Uterus (tissue), 4 donors: ENCODE measurements at regions of chr6 and their contacts with region 1.

Region 1: DNA sequence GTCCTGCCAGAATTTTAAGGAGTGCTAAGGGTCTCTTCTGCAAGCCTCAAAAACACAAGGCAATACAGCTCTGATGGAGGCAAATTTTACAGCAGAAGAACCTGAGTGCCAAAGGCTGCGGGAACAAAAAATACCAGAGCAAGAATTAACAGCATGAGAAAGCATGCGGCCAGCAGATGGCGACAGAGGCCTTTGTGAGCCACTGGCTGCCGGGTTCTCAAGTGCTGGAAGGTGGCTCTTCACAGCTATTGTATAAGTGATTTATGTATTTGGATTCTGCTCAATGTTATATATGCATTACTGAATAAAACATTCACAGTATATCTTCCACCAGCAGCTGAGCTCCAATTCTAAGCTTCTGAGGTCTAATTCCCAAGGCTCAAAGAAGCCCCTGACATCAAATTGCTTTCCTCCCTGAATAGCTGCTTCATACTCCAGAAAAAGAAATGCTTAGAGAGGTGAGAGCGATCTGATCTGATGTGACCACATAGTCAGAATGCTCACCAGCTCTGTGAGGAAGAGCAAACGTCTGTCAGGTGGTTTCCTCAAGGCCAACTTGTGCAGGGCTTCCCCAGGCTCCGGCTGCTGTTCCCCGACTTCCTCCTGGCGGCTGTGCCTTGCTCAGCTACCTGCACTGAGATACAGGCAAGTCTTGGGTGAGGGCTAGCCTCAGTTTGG is 58.6 kb downstream of the PPP1R3G start:
- DNase-seq: peak; percentile 83 to 84
- H3K4me3 ChIP-seq: no peak overlapping the region
- H3K27ac ChIP-seq: no peak overlapping the region
- H3K4me1 ChIP-seq: no peaks in the 10 kb centered on the region
- H3K27me3 ChIP-seq: no peaks in the 10 kb centered on the region
- CTCF ChIP-seq: peak; percentile 85 to 95 (median 87)
- POLR2A ChIP-seq: no peak

Region 2: DNA sequence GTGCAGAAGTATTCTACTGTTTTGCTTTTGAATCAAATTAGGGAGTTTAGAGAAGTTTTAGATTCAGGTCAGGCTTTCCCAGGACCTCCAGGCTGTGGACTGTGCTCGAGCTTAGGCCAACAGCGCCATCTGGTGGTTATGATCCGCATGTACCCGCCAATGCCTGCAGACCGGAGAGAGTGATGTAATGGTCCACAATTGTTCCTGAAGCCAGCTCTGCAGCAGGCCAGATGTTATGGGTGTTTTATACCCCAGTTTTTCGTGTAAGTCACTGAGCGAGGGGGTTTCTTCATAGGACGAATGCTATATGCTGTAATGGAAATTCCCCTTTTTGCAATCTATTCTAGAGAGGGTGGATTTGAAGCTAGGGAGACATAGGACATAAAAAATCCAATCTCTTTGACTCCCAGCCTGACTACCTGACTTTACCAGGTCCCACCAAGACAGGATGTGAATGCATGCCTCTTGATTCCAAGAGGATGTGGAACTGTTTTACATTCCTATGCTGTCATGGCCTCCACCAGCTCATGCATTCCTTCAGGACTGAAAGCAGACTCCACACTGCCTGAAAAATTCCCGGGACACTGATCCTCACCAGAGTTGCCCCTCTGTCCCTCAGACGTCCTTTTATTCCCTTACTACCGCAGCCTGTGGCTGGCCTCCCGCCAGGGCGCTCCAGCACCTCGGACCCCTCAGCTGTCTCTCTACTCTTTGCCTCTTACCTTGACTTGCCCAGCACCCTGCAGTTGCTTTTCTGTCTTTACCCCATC is 1403.5 kb after region 1 on chr6:
- intact Hi-C with region 1: loop called (anchors 10 kb)
- DNase-seq: peak; percentile 86 to 91
- H3K4me3 ChIP-seq: peak overlapping the region; percentile 21 to 37
- H3K27ac ChIP-seq: no peak overlapping the region
- H3K4me1 ChIP-seq: peaks cover 0 to 4% of the 10 kb centered on the region in 2 donors
- H3K27me3 ChIP-seq: no peaks in the 10 kb centered on the region
- CTCF ChIP-seq: peak; percentile 90 to 94 (median 92)
- POLR2A ChIP-seq: no peak